AG04449 (cell line): ENCODE measurements at regions of chr1 and their contacts with region 1.

Region 1: GRCh38 chr1:224052772-224053171 is 61.1 kb upstream of the FBXO28 start:
- DNase-seq: no peak
- H3K4me3 ChIP-seq: no peak overlapping the region
- CTCF ChIP-seq: no peak

Region 2: GRCh38 chr1:224067621-224068457 is 15.1 kb after region 1 on chr1:
- CTCF ChIA-PET with region 1: interaction called, 66 read pairs
- POLR2A ChIA-PET with region 1: no interaction called
- DNase-seq: no peak
- H3K4me3 ChIP-seq: no peak overlapping the region
- CTCF ChIP-seq: no peak

Region 3: DNA sequence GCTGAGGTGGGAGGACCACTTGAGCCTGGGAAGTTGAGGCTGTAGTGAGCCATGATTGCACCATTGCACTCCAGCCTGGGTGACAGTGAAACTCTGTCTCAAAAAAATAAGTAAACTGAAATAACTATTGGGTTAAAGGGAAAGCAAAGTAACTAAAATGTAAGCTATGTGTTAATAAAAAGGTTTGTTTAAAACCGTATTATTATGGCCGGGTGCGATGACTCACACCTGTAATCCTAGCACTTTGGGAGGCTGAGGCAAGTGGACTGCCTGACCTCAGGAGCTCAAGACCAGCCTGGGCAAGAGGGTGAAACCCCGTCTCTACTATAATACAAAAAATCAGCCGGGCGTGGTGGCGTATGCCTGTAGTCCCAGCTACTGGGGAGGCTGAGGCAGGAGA is 250.2 kb after region 1 on chr1:
- CTCF ChIA-PET with region 1: no interaction called
- POLR2A ChIA-PET with region 1: no interaction called
- DNase-seq: no peak
- H3K4me3 ChIP-seq: no peak overlapping the region
- CTCF ChIP-seq: no peak